Vagina (tissue), 2 donors: ENCODE measurements at regions of chrX and their contacts with region 1.

Region 1: GRCh38 chrX:109911046-109911445 is 91.9 kb upstream of the TMEM164 start:
- DNase-seq: no peak
- H3K4me3 ChIP-seq: no peak overlapping the region
- H3K27ac ChIP-seq: no peak overlapping the region
- H3K4me1 ChIP-seq: no peaks in the 10 kb centered on the region
- H3K27me3 ChIP-seq: no peaks in the 10 kb centered on the region
- CTCF ChIP-seq: peak in 1 of 3 experiments; percentile 16
- POLR2A ChIP-seq: no peak

Region 2: GRCh38 chrX:109830704-109831206 is 80.3 kb before region 1 on chrX:
- intact Hi-C with region 1: no loop called
- DNase-seq: no peak
- H3K4me3 ChIP-seq: no peak overlapping the region
- H3K27ac ChIP-seq: no peak overlapping the region
- H3K4me1 ChIP-seq: no peaks in the 10 kb centered on the region
- H3K27me3 ChIP-seq: no peaks in the 10 kb centered on the region
- CTCF ChIP-seq: no peak
- POLR2A ChIP-seq: no peak

Region 3: DNA sequence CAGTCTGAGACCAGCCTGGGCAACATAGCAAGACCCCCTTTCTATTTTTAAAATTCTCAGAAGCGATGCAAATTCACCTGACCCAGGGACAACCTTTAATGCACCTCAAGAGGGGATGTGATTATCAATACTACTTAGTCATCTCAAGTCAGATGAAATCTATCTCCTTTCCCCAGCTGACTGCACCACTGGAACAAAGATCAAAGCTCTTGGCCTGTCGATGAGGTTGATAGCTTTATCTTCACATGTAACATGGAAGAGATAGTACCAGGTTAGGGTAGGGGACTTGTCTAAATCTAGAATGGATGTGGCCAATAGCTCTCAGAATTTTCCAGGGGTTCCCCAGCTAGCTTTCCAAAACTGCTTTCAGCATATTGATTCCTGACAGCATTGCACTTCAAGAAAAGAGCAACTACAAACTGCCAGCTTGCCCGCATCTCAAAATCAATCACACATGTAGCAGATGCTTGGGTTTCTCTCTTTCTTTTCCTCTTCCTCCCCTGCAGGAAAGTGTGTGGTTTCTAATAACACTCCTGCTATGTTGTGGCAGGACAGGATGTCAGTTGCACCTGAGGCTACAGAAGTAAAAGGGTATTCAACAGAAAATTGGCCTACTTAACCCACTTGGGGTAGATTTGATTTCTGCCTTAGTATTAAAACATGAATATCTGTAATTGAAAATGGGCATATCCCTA is 79.7 kb after region 1 on chrX:
- intact Hi-C with region 1: no loop called
- DNase-seq: no peak
- H3K4me3 ChIP-seq: no peak overlapping the region
- H3K27ac ChIP-seq: no peak overlapping the region
- H3K4me1 ChIP-seq: no peaks in the 10 kb centered on the region
- H3K27me3 ChIP-seq: no peaks in the 10 kb centered on the region
- CTCF ChIP-seq: no peak
- POLR2A ChIP-seq: no peak

Region 4: DNA sequence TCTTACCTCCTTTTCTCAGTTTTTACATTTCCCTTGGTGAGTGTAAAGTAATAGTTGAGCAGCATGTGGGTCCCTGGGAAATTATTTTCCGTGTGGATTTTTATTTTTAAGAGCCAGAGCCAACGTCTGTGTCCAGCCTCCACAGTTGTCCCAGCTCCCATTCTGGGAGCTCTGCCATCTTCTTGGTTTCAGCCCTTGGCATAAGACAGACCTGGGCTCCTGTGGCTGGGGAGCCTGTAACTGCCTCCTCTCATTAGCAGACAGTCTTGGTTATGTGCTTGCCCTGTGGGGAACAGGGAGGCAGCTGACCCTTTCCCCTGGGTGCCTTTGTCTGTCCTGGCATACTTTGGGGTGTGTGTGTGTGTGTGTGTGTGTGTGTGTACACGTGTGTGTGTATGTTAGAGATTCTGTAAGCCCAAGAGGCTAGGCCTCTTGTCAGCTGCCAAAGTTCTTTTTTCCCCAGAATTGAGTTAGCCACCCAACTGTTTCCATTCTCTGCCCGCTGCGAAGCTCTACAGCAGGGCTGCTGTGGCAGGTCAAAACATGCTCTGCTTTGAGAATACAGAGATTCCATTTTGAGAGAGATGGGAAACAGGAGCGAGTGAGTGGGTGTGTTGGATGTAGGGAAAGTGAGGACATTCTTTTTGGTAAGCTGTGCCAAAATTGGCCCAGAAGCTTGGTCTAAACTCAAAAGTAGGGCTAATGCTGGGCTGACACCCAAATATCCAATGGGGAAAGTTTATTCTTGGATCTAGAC is 232.6 kb after region 1 on chrX:
- intact Hi-C with region 1: loop called (anchors 5 kb)
- DNase-seq: no peak
- H3K4me3 ChIP-seq: no peak overlapping the region
- H3K27ac ChIP-seq: no peak overlapping the region
- H3K4me1 ChIP-seq: no peaks in the 10 kb centered on the region
- H3K27me3 ChIP-seq: no peaks in the 10 kb centered on the region
- CTCF ChIP-seq: no peak
- POLR2A ChIP-seq: no peak